Activated naive CD4-positive, alpha-beta T cell treated with anti-CD3 and anti-CD28 coated beads, Interleukin-2, amount 10 ng/mL, durations not matched to agents 7 days and 5 days (primary cell): ENCODE measurements at regions of chr12 and their contacts with region 1.

Region 1: GRCh38 chr12:47307680-47308399 is 228.1 kb upstream of the AMIGO2 start:
- DNase-seq: peak; percentile 68
- H3K4me3 Mint-ChIP-seq: peak overlapping the region; percentile 78
- H3K27ac Mint-ChIP-seq: peak overlapping the region; percentile 87
- H3K4me1 Mint-ChIP-seq: peaks cover 49% of the 10 kb centered on the region
- H3K27me3 Mint-ChIP-seq: no peaks in the 10 kb centered on the region

Region 2: GRCh38 chr12:47071241-47071852 is 236.5 kb before region 1 on chr12:
- CTCF ChIA-PET with region 1: interaction called, 14 read pairs
- DNase-seq: no peak
- H3K4me3 Mint-ChIP-seq: no peak overlapping the region
- H3K27ac Mint-ChIP-seq: no peak overlapping the region
- H3K4me1 Mint-ChIP-seq: peaks cover under 1% of the 10 kb centered on the region
- H3K27me3 Mint-ChIP-seq: no peaks in the 10 kb centered on the region

Region 3: GRCh38 chr12:47207340-47207717 is 100.5 kb before region 1 on chr12:
- CTCF ChIA-PET with region 1: interaction called, 10 read pairs
- DNase-seq: peak; percentile 73
- H3K4me3 Mint-ChIP-seq: peak overlapping the region; percentile 81
- H3K27ac Mint-ChIP-seq: peak overlapping the region; percentile 79
- H3K4me1 Mint-ChIP-seq: peaks cover 81% of the 10 kb centered on the region
- H3K27me3 Mint-ChIP-seq: no peaks in the 10 kb centered on the region

Region 4: GRCh38 chr12:47276621-47277309 is 31.1 kb before region 1 on chr12:
- CTCF ChIA-PET with region 1: interaction called, 10 read pairs
- DNase-seq: peak; percentile 78
- H3K4me3 Mint-ChIP-seq: peak overlapping the region; percentile 33
- H3K27ac Mint-ChIP-seq: peak overlapping the region; percentile 95
- H3K4me1 Mint-ChIP-seq: peaks cover 82% of the 10 kb centered on the region
- H3K27me3 Mint-ChIP-seq: no peaks in the 10 kb centered on the region

Region 5: GRCh38 chr12:47326956-47327355 is 19.1 kb after region 1 on chr12:
- CTCF ChIA-PET with region 1: no interaction called
- DNase-seq: no peak
- H3K4me3 Mint-ChIP-seq: no peak overlapping the region
- H3K27ac Mint-ChIP-seq: no peak overlapping the region
- H3K4me1 Mint-ChIP-seq: peaks cover 18% of the 10 kb centered on the region
- H3K27me3 Mint-ChIP-seq: no peaks in the 10 kb centered on the region